ENCODE measurements at regions of chr12 and their contacts with region 1.

Region 1: DNA sequence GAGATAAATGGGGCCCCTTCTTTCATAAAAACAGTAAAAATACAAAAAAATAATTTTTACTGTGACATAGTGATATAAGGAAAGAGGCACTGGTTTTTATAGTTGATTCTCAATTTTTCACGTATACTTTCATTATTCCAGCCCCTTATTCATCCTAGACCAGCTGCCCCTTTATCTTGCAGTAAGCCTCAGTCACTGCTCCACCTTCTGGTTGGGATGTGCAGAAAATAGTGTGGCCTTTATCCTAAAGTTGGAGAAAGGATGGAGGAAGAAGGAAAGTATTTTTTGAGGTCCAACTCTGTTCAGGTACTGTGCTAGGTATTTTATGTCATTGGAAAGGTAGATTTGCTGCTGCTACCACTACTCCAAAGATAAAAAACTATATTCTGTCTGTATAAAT is 172.7 kb downstream of the ANO6 start:
- DNase-seq: peak; percentile 29
- ATAC-seq: peak; percentile 69; the same call in 2 of the 3 replicates
- H3K4me3 ChIP-seq: no peak overlapping the region
- H3K27ac ChIP-seq: no peak overlapping the region
- H3K4me1 ChIP-seq: no peaks in the 10 kb centered on the region
- H3K27me3 ChIP-seq: no peaks in the 10 kb centered on the region
- CTCF ChIP-seq: peak; percentile 63
- EP300 ChIP-seq: no peak
- POLR2A ChIP-seq: no peak
- RAD21 ChIP-seq: peak; percentile 30; the same call in 1 of the 2 replicates

Region 2: GRCh38 chr12:45170456-45171042 is 218.0 kb before region 1 on chr12:
- CTCF ChIA-PET with region 1: interaction called, 16 read pairs
- POLR2A ChIA-PET with region 1: no interaction called
- in situ Hi-C with region 1: loop called (anchors 10 kb)
- intact Hi-C with region 1: loop called (anchors 1 kb)
- DNase-seq: peak; percentile 62
- ATAC-seq: peak; percentile 90
- H3K4me3 ChIP-seq: no peak overlapping the region
- H3K27ac ChIP-seq: no peak overlapping the region
- H3K4me1 ChIP-seq: no peaks in the 10 kb centered on the region
- H3K27me3 ChIP-seq: no peaks in the 10 kb centered on the region
- CTCF ChIP-seq: peak; percentile 86
- EP300 ChIP-seq: no peak
- POLR2A ChIP-seq: no peak
- RAD21 ChIP-seq: peak; percentile 64; the same call in 1 of the 2 replicates

Region 3: DNA sequence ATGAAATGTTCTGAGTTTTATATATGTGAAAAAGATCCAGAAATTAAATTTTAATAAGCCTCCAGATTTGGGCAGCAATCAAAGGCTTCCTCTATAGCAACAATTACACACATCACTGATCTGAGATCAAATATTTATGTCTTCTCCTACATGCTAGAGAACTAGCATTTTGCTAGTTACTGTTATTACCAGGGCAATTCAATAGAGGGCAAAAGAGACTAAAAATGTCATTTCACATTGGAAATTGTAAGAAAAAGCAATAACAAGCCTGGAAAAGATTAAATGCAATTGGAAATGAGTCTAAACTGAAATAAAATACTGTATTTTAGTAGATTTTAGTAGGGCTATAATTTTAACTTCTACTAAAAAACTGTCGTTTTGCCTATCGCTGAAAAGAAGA is 205.3 kb before region 1 on chr12:
- CTCF ChIA-PET with region 1: interaction called, 10 read pairs
- POLR2A ChIA-PET with region 1: no interaction called
- in situ Hi-C with region 1: loop called (anchors 10 kb)
- intact Hi-C with region 1: loop called (anchors 1 kb)
- DNase-seq: peak; percentile 13
- ATAC-seq: no peak
- H3K4me3 ChIP-seq: no peak overlapping the region
- H3K27ac ChIP-seq: no peak overlapping the region
- H3K4me1 ChIP-seq: peaks cover under 1% of the 10 kb centered on the region; the same call in 1 of the 2 replicates
- H3K27me3 ChIP-seq: no peaks in the 10 kb centered on the region
- CTCF ChIP-seq: peak; percentile 51
- EP300 ChIP-seq: no peak
- POLR2A ChIP-seq: no peak
- RAD21 ChIP-seq: no peak

Region 4: DNA sequence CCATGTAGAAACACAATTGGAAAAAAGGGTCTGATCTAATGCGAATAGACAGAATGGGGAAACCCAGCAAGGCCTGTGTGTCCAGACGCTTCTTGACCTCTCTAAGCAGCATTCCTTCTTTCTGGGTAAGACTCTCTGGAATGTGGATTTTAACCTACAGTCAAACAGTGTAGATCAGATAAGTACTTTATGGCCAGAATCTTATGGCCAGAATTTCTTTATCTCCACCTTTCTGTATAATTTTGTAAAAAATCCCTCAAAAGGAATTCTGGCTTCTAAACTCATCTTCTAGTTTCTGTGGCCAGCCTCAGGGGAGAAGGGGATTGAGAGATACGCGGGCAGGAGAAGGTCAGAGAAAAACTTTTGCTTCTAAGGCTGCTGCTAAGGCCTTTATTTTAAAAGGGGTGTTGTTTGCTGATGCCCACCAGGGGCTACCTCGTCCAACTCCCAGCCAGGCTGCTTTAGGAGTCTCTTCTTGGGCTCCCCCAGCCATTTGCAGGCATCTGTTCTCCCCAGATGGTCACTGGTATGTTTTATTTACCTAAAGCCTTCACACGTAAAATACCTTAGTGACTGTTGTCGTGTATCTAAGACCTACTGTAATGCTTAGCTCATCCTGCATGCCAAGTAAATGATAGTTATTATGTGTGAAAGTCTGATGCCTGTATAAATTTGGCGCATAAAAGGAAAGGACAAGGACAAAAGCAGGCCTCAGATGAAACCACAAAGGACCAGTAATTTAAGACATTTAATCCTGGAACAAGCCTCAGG is 104.2 kb before region 1 on chr12:
- CTCF ChIA-PET with region 1: no interaction called
- POLR2A ChIA-PET with region 1: no interaction called
- in situ Hi-C with region 1: no loop called
- intact Hi-C with region 1: loop called (anchors 5 kb)
- DNase-seq: peak; percentile 31
- ATAC-seq: peak; percentile 48; the same call in 2 of the 3 replicates
- H3K4me3 ChIP-seq: no peak overlapping the region
- H3K27ac ChIP-seq: no peak overlapping the region
- H3K4me1 ChIP-seq: peaks cover 36% of the 10 kb centered on the region
- H3K27me3 ChIP-seq: no peaks in the 10 kb centered on the region
- CTCF ChIP-seq: no peak
- EP300 ChIP-seq: no peak
- POLR2A ChIP-seq: no peak
- RAD21 ChIP-seq: no peak